ENCODE measurements at regions of chr18 and their contacts with region 1.

Region 1: DNA sequence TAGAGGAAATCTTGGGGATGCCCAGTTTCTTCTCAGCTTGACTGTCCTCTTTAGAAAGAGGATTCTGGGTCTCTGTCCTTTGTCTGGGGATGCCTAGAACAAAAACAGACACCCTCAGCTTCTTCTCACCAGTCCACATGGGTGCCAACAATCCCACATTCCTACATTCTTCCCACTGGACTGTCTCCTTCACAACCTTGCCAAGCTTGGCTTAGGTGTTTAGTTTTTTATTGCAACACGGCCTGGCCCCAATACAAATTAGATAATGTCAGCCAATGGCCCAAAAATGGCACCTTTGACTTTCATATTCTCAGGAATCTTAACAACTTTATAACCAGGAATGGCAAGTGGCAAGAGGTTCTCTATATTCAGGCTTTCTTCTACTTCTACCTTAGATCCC is 273.0 kb downstream of the RNF152 start:
- DNase-seq: no peak
- ATAC-seq: no peak

Region 2: GRCh38 chr18:60292186-60292585 is 1327.6 kb before region 1 on chr18:
- intact Hi-C with region 1: loop called (anchors 5 kb)
- DNase-seq: no peak
- ATAC-seq: no peak

Measured in sciatic nerve (tissue), 2 donors.